OCI-LY7 (cell line): ENCODE measurements at regions of chr5 and their contacts with region 1.

Region 1: DNA sequence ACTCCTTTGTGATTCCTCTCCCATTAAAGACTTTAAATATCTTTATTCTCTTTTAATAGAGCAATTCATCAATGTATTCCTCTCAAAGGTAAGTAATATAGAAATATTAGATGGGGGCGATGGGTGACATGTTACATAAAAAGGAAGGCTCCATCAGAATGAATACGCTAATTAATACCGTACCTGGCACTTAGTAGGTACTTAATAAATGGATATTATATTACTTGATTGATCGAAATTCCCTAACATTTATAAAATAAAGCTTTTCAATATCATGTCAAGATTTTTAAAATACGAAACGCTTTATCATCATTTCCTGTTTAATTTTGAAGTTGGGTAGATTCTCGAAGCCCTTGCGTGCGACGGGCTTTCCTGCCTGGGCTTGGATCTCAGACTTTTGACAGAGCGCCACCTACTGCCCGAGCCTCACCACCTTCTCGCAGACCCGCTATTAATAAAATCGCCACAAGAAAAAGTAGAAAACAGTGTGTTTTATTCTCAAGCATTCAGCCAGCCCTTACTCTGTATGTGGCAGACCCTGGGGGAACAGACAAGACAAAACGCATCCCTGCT is 99.4 kb downstream of the C5orf15 start:
- DNase-seq: peak; percentile 77
- H3K4me3 ChIP-seq: no peak overlapping the region
- H3K27ac ChIP-seq: no peak overlapping the region
- H3K4me1 ChIP-seq: no peaks in the 10 kb centered on the region
- CTCF ChIP-seq: peak; percentile 99

Region 2: DNA sequence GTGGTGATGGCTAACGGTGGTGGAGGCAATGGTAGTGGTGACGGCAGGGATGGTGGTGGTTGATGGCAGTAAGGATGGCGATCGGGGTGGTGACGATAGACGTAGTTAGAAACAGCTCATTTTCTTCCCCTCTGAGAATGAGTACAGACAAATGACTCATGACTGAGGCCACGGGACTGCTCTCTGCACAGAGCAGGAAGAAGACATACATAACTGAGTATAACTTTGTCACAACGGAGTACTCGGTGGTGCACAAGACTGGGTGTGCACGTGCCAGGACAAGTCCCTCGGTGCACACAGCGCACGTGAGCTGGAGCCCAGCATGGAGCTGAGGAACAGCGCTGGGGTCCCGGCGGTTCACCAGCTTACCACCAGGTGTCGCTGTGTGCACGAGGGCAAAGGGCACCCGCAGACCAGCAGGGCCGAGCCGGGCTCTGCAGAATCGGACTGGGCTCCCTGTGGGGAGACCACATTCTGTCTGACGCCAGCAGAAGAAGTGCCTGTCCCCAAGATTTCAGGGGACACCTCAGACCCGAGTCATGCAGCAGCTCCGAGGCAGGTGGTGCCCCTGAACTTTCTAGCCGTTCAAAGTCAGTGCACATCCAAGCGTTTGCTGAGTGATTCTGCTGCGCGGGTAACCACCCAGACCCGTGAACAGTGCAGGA is 445.3 kb before region 1 on chr5:
- CTCF ChIA-PET with region 1: interaction called, 3 read pairs
- POLR2A ChIA-PET with region 1: no interaction called
- intact Hi-C with region 1: loop called (anchors 5 kb)
- DNase-seq: peak; percentile 56
- H3K4me3 ChIP-seq: no peak overlapping the region
- H3K27ac ChIP-seq: no peak overlapping the region
- H3K4me1 ChIP-seq: peaks cover 6% of the 10 kb centered on the region
- CTCF ChIP-seq: peak; percentile 88

Region 3: GRCh38 chr5:133552931-133553525 is 316.0 kb before region 1 on chr5:
- CTCF ChIA-PET with region 1: no interaction called
- POLR2A ChIA-PET with region 1: no interaction called
- intact Hi-C with region 1: loop called (anchors 1 kb)
- DNase-seq: peak; percentile 63
- H3K4me3 ChIP-seq: no peak overlapping the region
- H3K27ac ChIP-seq: no peak overlapping the region
- H3K4me1 ChIP-seq: no peaks in the 10 kb centered on the region
- CTCF ChIP-seq: peak; percentile 88

Region 4: GRCh38 chr5:133596049-133596448 is 273.0 kb before region 1 on chr5:
- CTCF ChIA-PET with region 1: no interaction called
- POLR2A ChIA-PET with region 1: no interaction called
- intact Hi-C with region 1: no loop called
- DNase-seq: no peak
- H3K4me3 ChIP-seq: no peak overlapping the region
- H3K27ac ChIP-seq: no peak overlapping the region
- H3K4me1 ChIP-seq: no peaks in the 10 kb centered on the region
- CTCF ChIP-seq: no peak

Region 5: DNA sequence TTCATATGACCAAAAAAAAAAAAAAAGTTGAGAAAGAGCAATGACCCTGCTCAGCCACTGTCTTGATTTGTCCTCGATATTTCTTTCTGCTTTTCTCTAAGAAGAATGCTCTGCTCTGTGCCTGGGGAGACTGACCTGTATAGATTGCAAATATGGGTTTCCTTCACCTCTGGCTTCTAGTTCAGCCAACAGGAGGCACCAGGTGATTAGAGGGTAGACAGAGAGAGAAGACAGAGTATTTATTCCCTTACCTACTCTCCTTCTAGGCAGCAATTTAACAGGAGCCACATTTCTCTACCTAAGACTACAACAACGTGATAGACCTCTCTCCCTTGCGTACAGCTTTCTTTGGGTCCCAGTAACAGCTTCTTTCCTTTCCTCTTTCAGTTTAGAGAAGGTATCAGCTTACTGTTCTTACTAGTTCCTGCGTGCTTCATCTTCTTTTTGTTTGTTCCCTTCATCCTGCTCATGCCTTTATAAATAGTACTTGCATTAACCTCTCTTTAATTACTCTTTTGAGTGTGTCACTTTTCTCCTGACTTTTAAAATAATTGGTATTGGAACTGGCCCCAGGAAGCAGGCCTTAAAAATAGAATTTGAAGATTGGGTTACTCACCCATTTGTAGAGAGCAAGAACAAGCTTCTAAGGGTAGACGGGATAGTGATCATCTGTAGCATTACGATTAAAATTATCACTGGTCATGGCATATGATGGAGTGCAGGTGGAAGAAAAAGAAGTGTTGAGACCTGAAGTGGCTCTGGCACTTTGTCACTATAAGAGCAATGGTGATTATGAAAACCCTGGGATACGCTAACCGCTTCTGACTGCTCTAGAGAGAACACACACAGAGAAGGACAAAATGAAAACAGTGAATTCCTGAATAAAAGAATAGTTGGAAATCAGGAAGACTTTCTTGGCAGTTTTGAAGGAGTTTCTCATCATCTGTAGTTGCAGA is 95.5 kb before region 1 on chr5:
- CTCF ChIA-PET with region 1: no interaction called
- POLR2A ChIA-PET with region 1: no interaction called
- intact Hi-C with region 1: loop called (anchors 5 kb)
- DNase-seq: no peak
- H3K4me3 ChIP-seq: no peak overlapping the region
- H3K27ac ChIP-seq: no peak overlapping the region
- H3K4me1 ChIP-seq: no peaks in the 10 kb centered on the region
- CTCF ChIP-seq: 0 out of 2 replicates have a peak, but pooled peaks have one; percentile 9